Activated CD8-positive, alpha-beta T cell treated with anti-CD3 and anti-CD28 coated beads, Interleukin-2, amount 10 ng/mL, durations not matched to agents 7 days and 5 days (primary cell): ENCODE measurements at regions of chr12 and their contacts with region 1.

Region 1: DNA sequence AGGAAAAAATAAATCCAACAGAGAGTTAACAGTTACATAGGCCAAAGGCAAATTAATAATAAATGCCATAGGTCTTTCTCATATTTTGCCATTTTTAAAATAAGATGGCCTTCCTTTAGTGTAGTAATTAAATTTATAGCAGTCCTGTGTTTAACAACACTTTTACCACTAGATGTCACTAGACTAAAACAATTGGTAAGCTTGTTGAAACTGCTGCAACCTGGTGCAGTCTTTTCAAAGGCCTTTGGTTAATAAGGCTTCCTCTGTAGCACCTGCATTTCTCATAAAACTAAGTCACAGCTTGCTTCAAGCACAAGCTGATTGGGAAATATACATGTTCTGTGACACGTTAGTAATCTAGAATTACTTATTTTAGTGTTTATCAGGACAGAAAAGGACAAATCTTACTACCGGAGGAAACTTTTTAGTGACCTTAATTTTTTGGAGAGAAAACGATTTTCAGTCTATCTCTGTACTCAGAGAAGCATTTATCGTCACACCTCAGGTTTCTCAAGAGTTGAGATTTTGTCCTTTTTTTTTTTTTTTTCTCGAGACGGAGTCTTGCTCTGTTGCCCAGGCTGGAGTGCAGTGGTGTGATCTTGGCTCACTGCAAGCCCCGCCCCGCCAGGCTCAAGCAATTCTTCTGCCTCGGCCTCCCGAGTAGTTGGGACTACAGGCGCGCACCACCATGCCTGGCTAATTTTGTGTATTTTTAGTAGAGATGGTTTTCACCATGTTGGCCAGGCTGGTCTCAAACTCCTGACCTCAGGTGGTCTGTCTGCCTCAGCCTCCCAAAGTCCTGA is 20.0 kb downstream of the BORCS5 start:
- DNase-seq: peak; percentile 54
- ATAC-seq: peak; percentile 64
- H3K4me3 Mint-ChIP-seq: no peak overlapping the region
- H3K27ac Mint-ChIP-seq: peak overlapping the region; percentile 1
- H3K4me1 Mint-ChIP-seq: peaks cover 42% of the 10 kb centered on the region
- H3K27me3 Mint-ChIP-seq: no peaks in the 10 kb centered on the region

Region 2: DNA sequence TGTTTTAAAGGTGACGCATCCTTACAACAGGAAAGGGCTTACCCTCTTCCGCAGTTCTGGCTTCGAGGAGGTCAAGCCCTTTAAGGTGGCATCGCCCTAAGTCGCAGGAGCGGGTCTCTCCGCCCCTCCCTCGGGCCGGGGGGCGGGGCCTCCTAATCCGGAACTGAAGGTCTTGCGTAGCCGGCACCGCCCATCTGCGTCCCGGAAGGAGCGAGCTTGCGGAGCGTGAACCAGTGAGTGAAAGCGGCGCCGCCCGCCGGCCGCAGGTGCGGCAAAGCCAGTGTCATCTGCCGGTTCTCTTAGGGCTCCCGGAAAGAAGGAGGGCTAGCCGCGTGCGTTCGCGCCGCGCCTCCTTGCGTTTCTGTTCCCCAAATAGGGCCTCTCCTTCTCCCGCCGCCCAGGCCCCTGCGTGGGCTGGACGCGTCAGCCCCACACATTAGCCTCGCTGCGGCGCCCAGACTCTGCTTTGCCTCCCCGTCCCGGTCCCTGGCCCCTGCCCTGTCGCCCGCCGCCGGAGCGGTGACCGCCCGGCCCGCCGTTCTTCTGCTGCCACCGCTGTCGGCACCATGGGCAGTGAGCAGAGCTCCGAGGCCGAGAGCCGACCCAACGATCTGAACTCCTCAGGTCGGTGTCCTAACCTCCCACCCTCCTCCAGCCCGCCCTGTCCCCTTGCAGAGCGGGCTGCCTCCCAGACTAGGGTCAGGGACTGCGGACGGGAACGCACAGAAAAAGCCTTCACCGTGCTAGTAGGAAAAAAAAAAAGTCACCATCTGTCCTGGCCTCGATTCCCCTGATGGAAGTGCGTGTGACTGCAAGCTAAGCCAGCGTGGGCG is 19.7 kb before region 1 on chr12 and contains the start of gene BORCS5:
- CTCF ChIA-PET with region 1: interaction called, 18 read pairs
- POLR2A ChIA-PET with region 1: interaction called, 14 read pairs
- DNase-seq: peak; percentile 99
- ATAC-seq: peak; percentile 94
- H3K4me3 Mint-ChIP-seq: peak within 1 kb of the TSS; percentile 88
- H3K27ac Mint-ChIP-seq: peak within 1 kb of the TSS; percentile 94
- H3K4me1 Mint-ChIP-seq: peaks cover 48% of the 10 kb centered on the region
- H3K27me3 Mint-ChIP-seq: no peaks in the 10 kb centered on the region
- total RNA-seq, gene BORCS5: 18.8 to 21.2 TPM

Region 3: DNA sequence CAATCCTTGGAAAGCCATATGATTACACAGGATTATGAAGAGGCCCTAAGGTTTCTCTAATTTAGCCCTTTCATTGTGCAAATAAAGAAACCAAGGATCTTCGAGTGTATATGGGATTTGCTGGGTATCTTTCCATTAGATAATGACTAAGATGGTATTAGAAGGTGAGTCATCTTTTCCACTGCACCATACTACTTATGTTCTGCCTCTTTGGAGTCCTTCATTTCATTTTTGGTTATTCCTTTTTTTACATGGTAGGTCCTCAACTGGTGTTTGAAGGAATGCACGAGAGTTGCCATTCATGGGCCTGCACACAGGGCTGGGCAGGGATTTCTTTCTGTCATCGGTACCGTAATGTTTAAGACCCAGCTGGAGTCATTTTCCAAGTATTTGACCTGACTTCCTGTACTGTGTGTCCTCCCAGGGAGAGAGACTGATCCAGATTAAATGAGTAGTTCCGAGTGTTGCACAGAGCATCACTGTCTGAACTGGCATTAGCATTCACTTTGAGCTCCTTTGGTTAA is 65.8 kb after region 1 on chr12:
- CTCF ChIA-PET with region 1: interaction called, 12 read pairs
- POLR2A ChIA-PET with region 1: interaction called, 11 read pairs
- DNase-seq: no peak
- ATAC-seq: peak; percentile 24
- H3K4me3 Mint-ChIP-seq: peak overlapping the region; percentile 26
- H3K27ac Mint-ChIP-seq: peak overlapping the region; percentile 91
- H3K4me1 Mint-ChIP-seq: peaks cover 63% of the 10 kb centered on the region
- H3K27me3 Mint-ChIP-seq: no peaks in the 10 kb centered on the region

Region 4: GRCh38 chr12:12486661-12487240 is 109.9 kb after region 1 on chr12:
- CTCF ChIA-PET with region 1: interaction called, 124 read pairs
- POLR2A ChIA-PET with region 1: interaction called, 10 read pairs
- DNase-seq: no peak
- ATAC-seq: no peak
- H3K4me3 Mint-ChIP-seq: no peak overlapping the region
- H3K27ac Mint-ChIP-seq: no peak overlapping the region
- H3K4me1 Mint-ChIP-seq: peaks cover 39% of the 10 kb centered on the region
- H3K27me3 Mint-ChIP-seq: no peaks in the 10 kb centered on the region

Region 5: GRCh38 chr12:12562585-12563261 is 185.9 kb after region 1 on chr12 and contains the start of gene DUSP16:
- CTCF ChIA-PET with region 1: interaction called, 46 read pairs
- POLR2A ChIA-PET with region 1: interaction called, 7 read pairs
- DNase-seq: peak; percentile 88
- ATAC-seq: peak; percentile 88
- H3K4me3 Mint-ChIP-seq: peak within 1 kb of the TSS; percentile 83
- H3K27ac Mint-ChIP-seq: peak within 1 kb of the TSS; percentile 91
- H3K4me1 Mint-ChIP-seq: peaks cover 35% of the 10 kb centered on the region
- H3K27me3 Mint-ChIP-seq: peaks cover 5% of the 10 kb centered on the region
- total RNA-seq, gene DUSP16: 17.4 to 19.0 TPM

Region 6: GRCh38 chr12:12582193-12582881 is 205.5 kb after region 1 on chr12:
- CTCF ChIA-PET with region 1: no interaction called
- POLR2A ChIA-PET with region 1: no interaction called
- DNase-seq: no peak
- ATAC-seq: no peak
- H3K4me3 Mint-ChIP-seq: no peak overlapping the region
- H3K27ac Mint-ChIP-seq: peak overlapping the region; percentile 39
- H3K4me1 Mint-ChIP-seq: peaks cover 6% of the 10 kb centered on the region
- H3K27me3 Mint-ChIP-seq: peaks cover 12% of the 10 kb centered on the region

Region 7: GRCh38 chr12:12654691-12655460 is 278.0 kb after region 1 on chr12:
- CTCF ChIA-PET with region 1: interaction called, 52 read pairs
- POLR2A ChIA-PET with region 1: no interaction called
- DNase-seq: no peak
- ATAC-seq: no peak
- H3K4me3 Mint-ChIP-seq: no peak overlapping the region
- H3K27ac Mint-ChIP-seq: no peak overlapping the region
- H3K4me1 Mint-ChIP-seq: peaks cover 8% of the 10 kb centered on the region
- H3K27me3 Mint-ChIP-seq: no peaks in the 10 kb centered on the region

Region 8: GRCh38 chr12:12786716-12787601 is 410.1 kb after region 1 on chr12:
- CTCF ChIA-PET with region 1: interaction called, 12 read pairs
- POLR2A ChIA-PET with region 1: no interaction called
- DNase-seq: peak; percentile 72
- ATAC-seq: peak; percentile 94
- H3K4me3 Mint-ChIP-seq: peak overlapping the region; percentile 80
- H3K27ac Mint-ChIP-seq: peak overlapping the region; percentile 87
- H3K4me1 Mint-ChIP-seq: peaks cover 43% of the 10 kb centered on the region
- H3K27me3 Mint-ChIP-seq: no peaks in the 10 kb centered on the region